Activated CD8-positive, alpha-beta T cell treated with anti-CD3 and anti-CD28 coated beads, Interleukin-2, amount 10 ng/mL, durations not matched to agents 7 days and 5 days (primary cell): ENCODE measurements at regions of chr5 and their contacts with region 1.

Region 1: DNA sequence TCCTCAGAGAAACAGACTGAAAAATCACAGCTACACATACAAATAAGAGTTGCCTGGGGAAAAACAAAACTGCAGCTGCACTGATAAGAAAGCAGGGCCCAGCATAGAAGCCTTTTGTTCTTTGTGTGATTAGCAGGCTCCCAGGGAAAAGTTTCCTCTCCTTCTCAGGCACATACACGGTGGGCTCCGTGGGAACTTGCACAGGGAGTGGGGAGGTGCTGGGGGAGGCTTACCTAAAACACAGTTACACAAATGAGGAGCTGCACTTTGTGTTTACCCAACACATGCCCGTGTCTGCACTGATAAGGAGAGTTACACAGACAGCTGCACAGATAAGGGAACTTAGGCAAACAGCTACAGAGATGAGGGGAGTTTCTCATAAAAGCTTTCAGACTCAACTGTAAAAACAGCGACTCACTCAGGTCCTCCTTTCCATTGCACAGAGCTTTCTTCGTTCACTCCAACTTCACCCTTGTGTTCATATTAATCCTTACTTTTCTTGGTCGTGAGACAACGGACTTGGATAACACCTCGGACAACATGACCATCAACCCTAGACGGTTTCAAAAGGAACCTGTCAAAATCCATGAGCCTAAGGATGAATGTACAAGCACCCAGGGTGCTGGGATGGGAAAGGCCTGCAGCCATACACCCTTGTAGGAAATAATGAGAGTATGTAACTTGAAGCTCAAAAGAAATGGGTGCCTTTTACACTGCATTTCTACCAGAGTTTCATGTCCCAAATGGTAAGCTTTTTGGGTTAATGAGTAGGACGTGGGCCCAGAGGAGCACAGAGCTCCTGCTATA is 50.8 kb downstream of the SERINC5 start:
- DNase-seq: no peak
- ATAC-seq: peak; percentile 41
- H3K4me3 Mint-ChIP-seq: no peak overlapping the region
- H3K27ac Mint-ChIP-seq: peak overlapping the region; percentile 48
- H3K4me1 Mint-ChIP-seq: peaks cover 42% of the 10 kb centered on the region
- H3K27me3 Mint-ChIP-seq: no peaks in the 10 kb centered on the region

Region 2: DNA sequence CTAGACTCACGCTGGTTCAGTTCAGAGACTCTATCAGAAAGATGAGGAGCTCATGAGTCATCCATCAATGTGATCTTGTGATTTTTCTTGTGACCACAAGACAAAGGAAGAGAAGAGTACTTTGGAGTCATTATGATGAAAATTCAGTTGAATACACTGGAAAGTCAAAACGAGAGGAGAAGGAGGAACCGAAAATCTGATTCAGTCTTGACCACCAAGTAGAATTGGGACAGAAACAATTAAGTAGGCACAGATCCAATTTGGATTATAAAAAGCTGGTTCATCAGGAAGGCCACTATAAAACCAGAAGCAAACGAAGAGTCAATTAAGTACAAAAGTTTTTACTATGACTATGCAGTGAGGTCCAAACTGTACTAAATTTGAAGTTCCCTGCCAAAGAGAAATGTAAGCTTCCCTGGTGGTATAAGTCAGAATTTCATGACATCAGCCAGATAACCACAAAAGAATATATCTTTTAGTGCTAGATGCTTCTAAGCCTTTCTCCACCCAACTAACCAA is 79.0 kb before region 1 on chr5:
- CTCF ChIA-PET with region 1: interaction called, 11 read pairs
- POLR2A ChIA-PET with region 1: no interaction called
- DNase-seq: no peak
- ATAC-seq: peak; percentile 84
- H3K4me3 Mint-ChIP-seq: peak overlapping the region; percentile 12
- H3K27ac Mint-ChIP-seq: peak overlapping the region; percentile 35
- H3K4me1 Mint-ChIP-seq: peaks cover 38% of the 10 kb centered on the region
- H3K27me3 Mint-ChIP-seq: no peaks in the 10 kb centered on the region

Region 3: DNA sequence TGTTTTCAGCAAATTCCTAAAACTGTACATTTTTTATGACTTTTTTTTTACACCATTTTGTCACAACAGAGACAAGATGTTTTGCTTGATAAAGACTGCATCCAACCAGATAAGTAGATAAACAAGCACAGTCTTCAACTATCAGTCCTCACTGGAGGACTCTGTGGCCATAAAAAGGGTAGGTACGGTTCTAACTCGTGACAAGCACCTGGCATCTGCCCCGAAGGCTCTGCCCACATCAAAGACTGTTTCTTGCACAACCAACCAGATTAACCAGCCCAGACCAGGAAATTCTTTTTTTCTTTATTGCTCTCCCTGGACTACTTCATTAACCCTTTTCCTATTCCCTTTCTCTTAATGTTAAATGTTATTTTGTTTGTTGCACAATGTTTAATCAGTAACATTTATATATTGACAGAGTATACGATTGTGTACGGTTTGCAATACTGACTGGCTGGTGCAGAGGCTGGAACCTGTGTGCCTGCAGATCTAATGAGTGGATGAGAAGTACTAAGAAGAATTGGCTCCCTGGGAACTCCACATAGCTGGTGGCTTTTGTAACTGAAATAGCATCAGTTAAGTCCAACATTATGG is 23.3 kb before region 1 on chr5:
- CTCF ChIA-PET with region 1: interaction called, 10 read pairs
- POLR2A ChIA-PET with region 1: interaction called, 5 read pairs
- DNase-seq: peak; percentile 75
- ATAC-seq: peak; percentile 74
- H3K4me3 Mint-ChIP-seq: peak overlapping the region; percentile 50
- H3K27ac Mint-ChIP-seq: peak overlapping the region; percentile 92
- H3K4me1 Mint-ChIP-seq: peaks cover 82% of the 10 kb centered on the region
- H3K27me3 Mint-ChIP-seq: no peaks in the 10 kb centered on the region

Region 4: DNA sequence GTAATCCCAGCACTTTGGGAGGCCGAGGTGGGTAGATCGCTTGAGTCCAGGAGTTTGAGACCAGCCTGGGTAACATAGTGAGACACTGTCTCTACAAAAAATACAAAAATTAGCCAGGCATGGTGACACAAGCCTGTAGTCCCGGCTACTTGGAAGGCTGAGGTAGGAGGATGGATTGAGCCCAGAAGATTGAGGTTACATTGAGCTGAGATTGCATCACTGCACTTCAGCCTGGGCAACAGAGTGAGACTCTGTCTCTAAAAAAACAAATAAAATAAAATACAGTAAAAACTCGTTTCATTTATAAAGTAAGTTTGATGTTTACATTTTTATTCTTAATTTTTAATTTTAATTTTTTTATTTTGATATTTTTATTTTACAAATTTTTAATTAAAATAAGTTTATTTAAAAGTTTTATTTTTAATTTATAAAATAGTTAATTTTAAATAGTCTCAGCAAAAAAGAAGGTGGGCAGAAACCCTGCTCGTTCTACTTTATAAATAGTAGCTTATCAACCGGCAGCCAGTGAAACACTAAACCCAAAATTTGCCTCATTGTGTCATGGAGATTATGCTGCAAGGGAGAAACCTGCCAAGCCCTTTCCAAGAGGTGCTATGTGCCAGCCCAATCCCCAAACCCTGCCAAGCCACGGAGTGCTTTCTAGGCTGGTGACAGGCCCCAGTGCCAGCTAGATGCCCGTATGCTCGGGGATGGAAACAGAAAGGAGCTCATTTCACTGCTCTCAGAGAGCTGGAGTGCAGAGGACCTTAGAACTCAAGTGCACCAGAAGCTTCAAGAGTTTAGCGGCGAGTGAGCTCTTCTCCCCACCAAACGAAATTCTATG is 12.0 kb after region 1 on chr5:
- CTCF ChIA-PET with region 1: interaction called, 20 read pairs
- POLR2A ChIA-PET with region 1: interaction called, 4 read pairs
- DNase-seq: peak; percentile 50
- ATAC-seq: peak; percentile 41
- H3K4me3 Mint-ChIP-seq: peak overlapping the region; percentile 54
- H3K27ac Mint-ChIP-seq: peak overlapping the region; percentile 76
- H3K4me1 Mint-ChIP-seq: peaks cover 80% of the 10 kb centered on the region
- H3K27me3 Mint-ChIP-seq: no peaks in the 10 kb centered on the region

Region 5: GRCh38 chr5:80302636-80303035 is 97.6 kb after region 1 on chr5:
- CTCF ChIA-PET with region 1: no interaction called
- POLR2A ChIA-PET with region 1: no interaction called
- DNase-seq: no peak
- ATAC-seq: no peak
- H3K4me3 Mint-ChIP-seq: no peak overlapping the region
- H3K27ac Mint-ChIP-seq: no peak overlapping the region
- H3K4me1 Mint-ChIP-seq: peaks cover 1% of the 10 kb centered on the region
- H3K27me3 Mint-ChIP-seq: peaks cover 3% of the 10 kb centered on the region